Panc1 (cell line): ENCODE measurements at regions of chr7 and their contacts with region 1.

Region 1: DNA sequence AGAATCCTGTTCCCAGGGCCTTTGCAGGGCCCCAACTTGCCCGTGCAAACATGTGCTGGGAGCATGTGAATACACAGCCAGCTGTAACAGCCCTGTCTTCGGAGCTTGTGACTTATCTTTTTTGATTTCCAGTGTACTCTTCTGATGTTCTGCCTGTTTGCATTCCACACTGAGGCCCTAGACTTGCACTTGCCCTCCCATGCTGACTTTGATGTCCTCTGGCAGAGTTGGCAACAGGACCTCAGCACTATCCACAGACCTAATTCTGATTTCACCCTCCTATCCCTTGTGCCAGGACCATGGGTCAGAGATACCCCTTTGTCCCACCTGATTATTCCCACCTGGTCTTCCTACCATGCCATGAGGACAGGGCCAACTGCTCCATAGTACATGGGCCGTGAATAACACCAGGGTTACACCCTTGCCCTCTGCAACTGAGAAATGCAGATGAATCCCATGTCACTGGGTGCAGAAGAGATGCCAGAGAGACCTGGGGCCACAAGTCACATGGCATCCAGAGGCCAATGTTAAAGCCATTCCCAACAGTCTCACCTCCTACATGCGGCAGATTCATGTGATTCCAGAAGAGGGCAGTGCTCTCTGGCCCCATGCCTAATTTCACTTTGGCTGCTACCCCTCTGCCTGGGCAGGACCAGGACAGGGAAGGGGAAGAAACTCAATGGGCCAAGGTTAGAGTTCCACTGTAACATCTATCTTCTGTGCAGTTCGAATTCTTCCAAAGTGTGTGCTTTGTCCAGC is 43.0 kb downstream of the SCRN1 start:
- DNase-seq: no peak
- ATAC-seq: peak; percentile 36; the same call in 1 of the 2 replicates
- H3K4me3 ChIP-seq: no peak overlapping the region
- H3K27ac ChIP-seq: no peak overlapping the region
- H3K4me1 ChIP-seq: no peaks in the 10 kb centered on the region
- H3K27me3 ChIP-seq: no peaks in the 10 kb centered on the region
- CTCF ChIP-seq: peak; percentile 70; the same call in 1 of the 2 replicates

Region 2: GRCh38 chr7:29622335-29623265 is 324.0 kb before region 1 on chr7:
- CTCF ChIA-PET with region 1: no interaction called
- POLR2A ChIA-PET with region 1: interaction called, 12 read pairs
- in situ Hi-C with region 1: no loop called
- intact Hi-C with region 1: no loop called
- DNase-seq: peak; percentile 93
- ATAC-seq: peak; percentile 96
- H3K4me3 ChIP-seq: no peak overlapping the region; a peak in 1 of 4 replicates
- H3K27ac ChIP-seq: no peak overlapping the region
- H3K4me1 ChIP-seq: 0 out of 2 replicates have a peak, but pooled peaks cover 6% of the 10 kb centered on the region
- H3K27me3 ChIP-seq: no peaks in the 10 kb centered on the region
- CTCF ChIP-seq: no peak

Region 3: DNA sequence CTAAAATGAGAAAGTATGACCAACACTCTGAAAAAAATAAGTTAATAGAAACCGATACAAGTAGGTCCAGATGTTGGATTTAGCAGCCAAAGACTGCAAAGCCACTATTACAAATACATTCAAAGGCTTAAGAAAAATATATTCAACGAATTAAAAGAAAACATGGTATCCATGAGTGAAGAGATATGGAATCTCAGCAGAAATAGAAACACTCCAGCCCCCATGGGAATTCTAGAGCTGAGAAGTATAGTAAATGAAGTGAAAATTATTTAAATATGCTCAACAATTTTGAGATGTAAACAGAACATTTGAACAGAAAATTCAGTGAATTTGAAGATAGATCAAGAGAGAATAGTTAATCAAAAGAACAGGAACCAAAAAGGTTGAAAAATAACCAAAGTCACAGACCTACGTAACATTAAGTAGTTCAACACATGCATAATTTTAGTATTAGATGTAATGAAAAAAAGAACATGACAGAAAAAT is 212.3 kb before region 1 on chr7:
- CTCF ChIA-PET with region 1: no interaction called
- POLR2A ChIA-PET with region 1: interaction called, 11 read pairs
- in situ Hi-C with region 1: no loop called
- intact Hi-C with region 1: no loop called
- DNase-seq: no peak
- ATAC-seq: no peak
- H3K4me3 ChIP-seq: no peak overlapping the region
- H3K27ac ChIP-seq: no peak overlapping the region
- H3K4me1 ChIP-seq: no peaks in the 10 kb centered on the region
- H3K27me3 ChIP-seq: 0 out of 2 replicates have a peak, but pooled peaks cover 2% of the 10 kb centered on the region
- CTCF ChIP-seq: no peak

Region 4: GRCh38 chr7:30062591-30062990 is 116.0 kb after region 1 on chr7:
- CTCF ChIA-PET with region 1: interaction called, 3 read pairs
- POLR2A ChIA-PET with region 1: no interaction called
- in situ Hi-C with region 1: no loop called
- intact Hi-C with region 1: loop called (anchors 5 kb)
- DNase-seq: peak; percentile 17
- ATAC-seq: peak; percentile 85
- H3K4me3 ChIP-seq: no peak overlapping the region
- H3K27ac ChIP-seq: no peak overlapping the region
- H3K4me1 ChIP-seq: no peaks in the 10 kb centered on the region
- H3K27me3 ChIP-seq: no peaks in the 10 kb centered on the region
- CTCF ChIP-seq: peak; percentile 44; the same call in 1 of the 2 replicates